Activated CD8-positive, alpha-beta T cell treated with anti-CD3 and anti-CD28 coated beads for 36 hours (primary cell): ENCODE measurements at regions of chr3 and their contacts with region 1.

Region 1: DNA sequence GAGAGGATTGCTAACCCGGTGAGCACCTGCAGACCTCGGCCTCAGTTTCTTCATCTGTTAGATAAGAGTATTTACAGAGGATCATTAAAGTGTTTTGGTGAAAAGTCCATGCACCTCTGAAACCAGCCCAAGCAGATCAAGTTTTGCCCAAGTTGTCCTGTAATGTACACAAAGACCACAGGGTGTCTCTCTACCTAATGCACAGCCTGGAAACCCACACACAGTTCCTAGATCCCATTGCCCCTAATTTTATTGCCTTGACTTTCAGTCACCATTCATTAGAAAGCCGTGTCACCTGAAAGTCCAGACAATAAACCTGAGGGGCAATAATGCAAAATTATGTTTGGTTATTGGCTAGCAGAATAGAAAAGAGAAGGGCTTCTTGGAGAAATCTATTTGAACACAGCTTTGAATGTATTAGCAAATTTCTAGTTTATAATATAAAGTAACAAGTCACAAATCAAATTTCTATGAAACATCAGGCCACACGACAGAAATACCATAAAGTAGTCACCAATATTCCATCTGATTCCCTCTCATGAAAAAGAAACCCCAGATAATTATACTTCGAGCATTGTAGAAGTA is 161.3 kb upstream of the SLC2A2 start:
- DNase-seq: peak; percentile 11
- ATAC-seq: no peak
- H3K4me3 Mint-ChIP-seq: no peak overlapping the region
- H3K27ac Mint-ChIP-seq: peak overlapping the region; percentile 15
- H3K4me1 Mint-ChIP-seq: peaks cover 57% of the 10 kb centered on the region
- H3K27me3 Mint-ChIP-seq: no peaks in the 10 kb centered on the region
- CTCF ChIP-seq: peak; percentile 64

Region 2: DNA sequence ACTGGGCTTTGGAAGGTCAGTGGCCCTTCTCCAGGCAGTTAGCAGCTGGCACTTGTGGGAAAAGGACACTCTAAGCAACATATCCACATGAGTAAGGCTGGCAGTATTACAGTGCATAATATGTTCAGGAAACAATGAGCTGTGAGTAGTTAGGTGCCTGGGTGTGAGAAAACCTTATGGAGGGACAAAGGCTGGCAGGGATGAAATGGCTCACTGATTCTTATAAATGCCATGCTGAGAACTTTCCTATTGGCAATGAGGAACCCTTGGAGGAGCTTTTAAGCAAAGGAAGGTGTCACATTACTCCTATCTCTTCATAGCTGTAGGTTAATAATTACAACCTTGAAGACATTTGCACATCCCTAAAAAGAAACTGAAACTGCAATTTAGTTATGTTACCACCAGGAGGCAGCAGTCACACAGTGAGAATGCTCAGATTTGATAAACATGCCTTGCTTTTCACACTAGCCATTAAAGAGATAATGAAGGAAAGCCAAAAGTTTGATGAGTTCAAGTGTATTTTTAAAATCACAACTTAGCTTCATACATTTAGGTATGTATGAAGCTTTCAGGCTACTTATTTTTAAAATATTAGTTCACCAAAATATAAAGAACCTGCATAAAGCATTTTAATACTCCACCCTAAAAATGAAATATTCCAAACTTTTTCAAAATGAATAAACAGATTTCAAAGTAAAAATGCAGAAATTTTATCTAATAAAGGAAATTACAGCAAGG is 24.6 kb before region 1 on chr3:
- CTCF ChIA-PET with region 1: interaction called, 10 read pairs
- POLR2A ChIA-PET with region 1: no interaction called
- intact Hi-C with region 1: no loop called
- DNase-seq: peak; percentile 20
- ATAC-seq: peak; percentile 42
- H3K4me3 Mint-ChIP-seq: no peak overlapping the region
- H3K27ac Mint-ChIP-seq: no peak overlapping the region
- H3K4me1 Mint-ChIP-seq: peaks cover 25% of the 10 kb centered on the region
- H3K27me3 Mint-ChIP-seq: no peaks in the 10 kb centered on the region
- CTCF ChIP-seq: peak; percentile 93

Region 3: GRCh38 chr3:171257251-171258203 is 69.7 kb after region 1 on chr3:
- CTCF ChIA-PET with region 1: interaction called, 4 read pairs
- POLR2A ChIA-PET with region 1: no interaction called
- intact Hi-C with region 1: loop called (anchors 5 kb)
- DNase-seq: no peak
- ATAC-seq: peak; percentile 24
- H3K4me3 Mint-ChIP-seq: no peak overlapping the region
- H3K27ac Mint-ChIP-seq: peak overlapping the region; percentile 91
- H3K4me1 Mint-ChIP-seq: peaks cover 84% of the 10 kb centered on the region
- H3K27me3 Mint-ChIP-seq: no peaks in the 10 kb centered on the region
- CTCF ChIP-seq: no peak

Region 4: GRCh38 chr3:171284308-171285075 is 96.7 kb after region 1 on chr3:
- CTCF ChIA-PET with region 1: no interaction called
- POLR2A ChIA-PET with region 1: no interaction called
- intact Hi-C with region 1: loop called (anchors 2 kb)
- DNase-seq: peak; percentile 31
- ATAC-seq: peak; percentile 55
- H3K4me3 Mint-ChIP-seq: peak overlapping the region; percentile 37
- H3K27ac Mint-ChIP-seq: peak overlapping the region; percentile 73
- H3K4me1 Mint-ChIP-seq: peaks cover 69% of the 10 kb centered on the region
- H3K27me3 Mint-ChIP-seq: no peaks in the 10 kb centered on the region
- CTCF ChIP-seq: no peak